Calu3 (cell line): ENCODE measurements at regions of chr11 and their contacts with region 1.

Region 1: DNA sequence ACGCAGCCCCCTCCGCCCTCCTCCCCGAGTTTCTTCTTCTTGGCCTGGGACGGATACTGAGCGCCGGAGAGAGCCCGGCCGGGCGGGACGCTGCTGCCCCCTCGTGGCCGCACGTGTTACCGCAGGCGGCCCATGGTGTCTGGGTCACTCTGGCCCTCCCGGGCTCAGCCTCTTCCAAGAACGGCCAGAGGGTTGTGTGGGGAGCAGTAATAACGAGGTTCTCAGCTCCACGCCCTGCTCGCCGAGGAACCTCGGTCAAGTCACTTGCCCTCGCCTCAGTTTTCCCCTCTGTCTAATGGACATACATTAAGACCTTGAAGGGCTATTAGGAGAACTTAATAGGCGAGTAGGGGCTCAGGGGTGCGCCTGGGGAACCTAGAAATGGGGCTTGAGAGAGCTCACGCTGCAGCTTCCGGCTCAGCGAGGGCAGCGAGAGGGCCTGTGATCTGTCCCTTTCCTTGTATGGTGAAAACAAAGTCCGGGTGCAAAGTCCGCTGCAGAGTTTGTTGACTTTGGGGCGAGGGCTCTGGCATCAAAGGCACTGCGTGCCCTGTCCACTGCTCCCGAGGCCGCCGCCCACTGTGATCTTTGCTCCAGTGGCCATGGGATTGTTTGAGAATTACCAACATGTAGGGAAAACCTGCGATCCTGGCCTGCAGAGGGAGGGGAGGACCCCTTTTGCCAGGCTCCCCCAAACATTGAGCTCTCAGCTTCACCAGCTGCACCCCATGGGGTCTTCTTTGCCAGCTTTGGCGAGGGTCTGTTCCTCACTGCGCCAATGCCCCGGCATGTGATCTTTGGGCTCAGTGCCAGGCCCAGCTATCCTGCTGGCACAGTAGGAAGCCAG is 14.4 kb upstream of the LRP5 start:
- DNase-seq: peak; percentile 87
- H3K4me3 Mint-ChIP-seq: peak overlapping the region; percentile 27
- H3K27ac Mint-ChIP-seq: no peak overlapping the region
- H3K4me1 Mint-ChIP-seq: peaks cover 24% of the 10 kb centered on the region
- H3K27me3 Mint-ChIP-seq: no peaks in the 10 kb centered on the region
- CTCF ChIP-seq: peak; percentile 96

Region 2: GRCh38 chr11:68213555-68214174 is 84.4 kb before region 1 on chr11:
- CTCF ChIA-PET with region 1: interaction called, 6 read pairs
- intact Hi-C with region 1: loop called (anchors 10 kb)
- DNase-seq: peak; percentile 89
- H3K4me3 Mint-ChIP-seq: peak overlapping the region; percentile 91
- H3K27ac Mint-ChIP-seq: peak overlapping the region; percentile 63
- H3K4me1 Mint-ChIP-seq: peaks cover 56% of the 10 kb centered on the region
- H3K27me3 Mint-ChIP-seq: peaks cover 15% of the 10 kb centered on the region
- CTCF ChIP-seq: no peak

Region 3: DNA sequence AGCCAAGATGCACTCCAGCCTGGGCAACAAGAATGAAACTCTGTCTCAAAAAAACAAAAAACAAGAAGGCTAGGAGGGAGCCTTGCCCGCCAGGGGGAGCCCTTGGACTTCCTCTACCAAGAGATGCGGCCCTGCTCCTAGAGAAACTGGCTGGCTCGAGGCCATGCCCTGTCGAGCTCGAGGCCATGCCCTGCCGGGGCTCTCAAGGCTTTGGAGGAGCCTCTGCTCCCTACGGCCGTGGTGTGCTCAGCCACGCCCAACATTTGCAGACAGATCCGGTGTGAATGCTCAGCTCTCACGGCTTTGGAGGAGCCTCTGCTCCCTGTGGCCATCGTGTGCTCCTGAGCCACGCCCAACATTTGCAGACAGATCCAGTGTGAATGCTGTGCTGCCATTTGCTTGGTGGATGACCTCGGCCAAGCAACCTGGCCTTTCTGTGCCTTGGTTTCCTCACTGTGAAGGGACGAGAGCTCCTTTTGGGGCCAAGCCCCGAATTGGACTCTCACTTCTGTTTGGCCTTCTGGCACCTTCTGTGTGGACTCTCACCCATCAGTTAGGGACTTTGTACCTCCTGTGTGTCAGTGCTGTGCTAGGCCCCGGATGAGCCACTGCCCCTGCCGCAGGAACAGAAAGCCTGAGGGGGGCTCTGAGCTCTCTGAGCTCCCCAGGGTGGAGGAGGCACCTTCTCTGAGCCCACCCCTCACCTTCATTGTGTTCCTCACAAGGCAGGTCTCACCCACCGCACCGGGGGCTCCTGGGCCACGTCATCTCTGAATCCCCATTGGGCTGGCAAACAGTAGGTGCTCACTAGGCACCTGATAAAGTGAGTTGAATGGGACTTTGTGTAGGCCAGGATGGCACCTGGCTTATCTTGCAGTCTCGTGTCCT is 40.3 kb before region 1 on chr11:
- CTCF ChIA-PET with region 1: interaction called, 47 read pairs
- intact Hi-C with region 1: loop called (anchors 1 kb)
- DNase-seq: peak; percentile 96
- H3K4me3 Mint-ChIP-seq: no peak overlapping the region
- H3K27ac Mint-ChIP-seq: no peak overlapping the region
- H3K4me1 Mint-ChIP-seq: no peaks in the 10 kb centered on the region
- H3K27me3 Mint-ChIP-seq: no peaks in the 10 kb centered on the region
- CTCF ChIP-seq: peak; percentile 85

Region 4: DNA sequence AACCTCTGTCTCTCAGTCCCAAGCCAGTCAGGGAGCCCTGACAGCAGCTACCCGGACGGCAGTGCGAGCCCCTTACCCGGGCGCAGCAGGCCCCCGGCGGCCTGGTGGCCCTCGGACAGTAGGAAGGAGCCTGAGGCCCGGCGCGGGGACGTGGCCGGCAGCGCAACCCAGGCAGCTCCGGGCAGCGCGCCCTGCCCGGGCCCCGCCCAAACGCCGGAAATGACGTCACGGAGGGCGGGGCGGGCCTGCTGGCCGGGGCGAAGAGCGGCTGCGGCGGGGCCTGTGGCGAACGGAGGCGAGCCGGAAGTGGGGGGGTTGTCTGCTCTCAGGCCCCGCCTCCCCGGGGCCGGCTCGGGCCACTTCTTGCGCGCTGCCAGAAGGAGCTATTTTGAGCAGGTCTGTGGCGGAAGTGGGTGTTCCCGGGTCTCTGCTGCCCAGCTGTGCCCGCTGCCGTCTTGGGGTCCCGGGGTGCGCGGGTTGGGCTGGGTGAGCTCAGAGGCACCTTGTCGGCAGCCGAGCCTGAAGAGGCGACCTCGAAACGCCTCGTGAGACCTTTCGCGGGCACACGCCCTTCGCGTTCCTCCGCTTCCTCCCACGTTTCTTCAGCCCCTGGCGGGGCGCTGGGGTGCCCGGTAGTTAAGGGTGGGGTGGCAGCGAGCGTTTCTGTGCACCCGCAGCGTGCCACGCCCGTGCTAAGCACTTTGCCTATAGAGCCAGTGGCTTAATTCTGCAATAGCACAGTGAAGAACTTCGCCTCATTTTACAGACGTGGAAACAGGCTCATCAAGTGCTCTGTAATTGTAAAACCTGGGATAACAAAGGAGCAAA is 26.0 kb before region 1 on chr11 and contains the start of gene C11orf24:
- CTCF ChIA-PET with region 1: interaction called, 23 read pairs
- intact Hi-C with region 1: loop called (anchors 2 kb)
- DNase-seq: peak; percentile 98
- H3K4me3 Mint-ChIP-seq: peak within 1 kb of the TSS; percentile 96
- H3K27ac Mint-ChIP-seq: peak within 1 kb of the TSS; percentile 94
- H3K4me1 Mint-ChIP-seq: peaks cover 47% of the 10 kb centered on the region
- H3K27me3 Mint-ChIP-seq: no peaks in the 10 kb centered on the region
- CTCF ChIP-seq: no peak
- total RNA-seq, gene C11orf24: 46.3 and 52.3 TPM in 2 replicates

Region 5: DNA sequence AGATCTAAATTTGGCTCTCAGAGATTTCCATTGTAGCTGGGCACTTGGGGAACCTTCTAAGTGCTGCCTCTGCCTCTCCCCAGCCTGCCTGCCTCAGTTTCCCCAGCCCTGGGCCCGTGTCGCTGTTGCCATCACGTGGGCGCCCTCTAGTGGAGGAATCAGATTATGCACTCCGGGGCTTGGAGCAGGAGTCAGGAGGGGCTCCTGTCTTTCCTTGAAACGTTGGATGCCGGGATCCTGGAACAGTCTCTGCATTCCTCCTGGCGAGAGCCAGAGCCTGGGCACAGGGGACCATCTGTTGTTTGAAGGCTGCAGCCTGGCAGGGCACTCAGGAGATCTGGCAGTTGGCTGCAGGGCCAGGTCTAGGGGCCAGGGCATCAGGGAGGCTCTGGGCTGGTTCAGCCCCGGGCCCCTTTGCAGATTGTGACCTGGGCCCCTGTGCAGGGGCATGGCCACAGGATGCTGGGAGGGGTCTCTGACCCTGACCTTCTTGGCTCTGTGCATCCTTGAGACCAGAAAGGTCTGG is 86.0 kb after region 1 on chr11:
- CTCF ChIA-PET with region 1: interaction called, 11 read pairs
- intact Hi-C with region 1: no loop called
- DNase-seq: peak; percentile 83
- H3K4me3 Mint-ChIP-seq: no peak overlapping the region
- H3K27ac Mint-ChIP-seq: no peak overlapping the region
- H3K4me1 Mint-ChIP-seq: peaks cover 25% of the 10 kb centered on the region
- H3K27me3 Mint-ChIP-seq: no peaks in the 10 kb centered on the region
- CTCF ChIP-seq: peak; percentile 97

Region 6: GRCh38 chr11:68459886-68460740 is 162.1 kb after region 1 on chr11:
- CTCF ChIA-PET with region 1: no interaction called
- intact Hi-C with region 1: no loop called
- DNase-seq: peak; percentile 96
- H3K4me3 Mint-ChIP-seq: peak overlapping the region; percentile 90
- H3K27ac Mint-ChIP-seq: peak overlapping the region; percentile 94
- H3K4me1 Mint-ChIP-seq: peaks cover 23% of the 10 kb centered on the region
- H3K27me3 Mint-ChIP-seq: no peaks in the 10 kb centered on the region
- CTCF ChIP-seq: no peak